Activated CD4-positive, alpha-beta T cell treated with anti-CD3 and anti-CD28 coated beads, Interleukin-2, amount 10 ng/mL, durations not matched to agents 7 days and 5 days (primary cell): ENCODE measurements at regions of chr5 and their contacts with region 1.

Region 1: DNA sequence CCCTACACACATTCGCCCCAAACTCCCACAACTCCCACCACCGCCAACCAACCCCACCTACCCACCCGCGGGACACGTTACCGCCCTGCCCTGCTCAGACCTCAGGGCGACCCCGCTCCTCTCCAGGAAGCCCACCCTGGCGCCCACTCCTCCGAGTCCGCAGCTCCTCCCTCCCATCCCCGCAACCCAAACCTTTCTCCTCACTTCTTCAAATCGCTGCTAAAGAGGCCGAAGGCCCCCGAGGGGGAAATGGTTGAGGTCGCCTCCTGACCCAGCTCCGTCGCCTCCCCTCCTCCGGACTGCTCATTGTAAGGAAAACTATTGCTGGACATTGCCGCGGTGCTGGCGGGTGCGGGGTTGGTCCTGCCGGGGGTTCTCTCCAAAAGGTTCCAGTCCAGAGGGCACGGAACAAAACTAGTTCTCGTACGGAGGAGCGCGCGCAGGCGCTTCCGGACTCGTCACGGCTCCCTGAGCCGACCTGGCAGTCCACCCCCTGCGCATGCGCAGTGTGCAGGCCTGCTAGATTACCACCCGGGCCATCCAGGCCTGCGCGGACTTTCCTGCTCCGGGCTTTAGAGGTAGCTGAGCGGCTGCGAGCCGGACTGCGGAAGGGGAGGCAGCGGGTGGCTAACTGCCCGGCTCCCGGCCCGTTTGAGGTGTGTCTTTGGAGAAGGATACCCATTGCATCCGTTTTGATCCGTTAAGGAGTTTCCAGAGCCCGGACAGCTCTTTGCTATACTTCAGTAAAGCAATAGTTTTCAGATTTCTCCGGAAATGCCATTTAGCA is at the start of gene AP3B1:
- DNase-seq: peak; percentile 98
- H3K4me3 Mint-ChIP-seq: peak within 1 kb of the TSS; percentile 97
- H3K27ac Mint-ChIP-seq: peak within 1 kb of the TSS; percentile 100
- H3K4me1 Mint-ChIP-seq: peaks cover 38% of the 10 kb centered on the region
- H3K27me3 Mint-ChIP-seq: peaks cover 3% of the 10 kb centered on the region
- total RNA-seq, gene AP3B1: 39.4 to 52.3 TPM

Region 2: DNA sequence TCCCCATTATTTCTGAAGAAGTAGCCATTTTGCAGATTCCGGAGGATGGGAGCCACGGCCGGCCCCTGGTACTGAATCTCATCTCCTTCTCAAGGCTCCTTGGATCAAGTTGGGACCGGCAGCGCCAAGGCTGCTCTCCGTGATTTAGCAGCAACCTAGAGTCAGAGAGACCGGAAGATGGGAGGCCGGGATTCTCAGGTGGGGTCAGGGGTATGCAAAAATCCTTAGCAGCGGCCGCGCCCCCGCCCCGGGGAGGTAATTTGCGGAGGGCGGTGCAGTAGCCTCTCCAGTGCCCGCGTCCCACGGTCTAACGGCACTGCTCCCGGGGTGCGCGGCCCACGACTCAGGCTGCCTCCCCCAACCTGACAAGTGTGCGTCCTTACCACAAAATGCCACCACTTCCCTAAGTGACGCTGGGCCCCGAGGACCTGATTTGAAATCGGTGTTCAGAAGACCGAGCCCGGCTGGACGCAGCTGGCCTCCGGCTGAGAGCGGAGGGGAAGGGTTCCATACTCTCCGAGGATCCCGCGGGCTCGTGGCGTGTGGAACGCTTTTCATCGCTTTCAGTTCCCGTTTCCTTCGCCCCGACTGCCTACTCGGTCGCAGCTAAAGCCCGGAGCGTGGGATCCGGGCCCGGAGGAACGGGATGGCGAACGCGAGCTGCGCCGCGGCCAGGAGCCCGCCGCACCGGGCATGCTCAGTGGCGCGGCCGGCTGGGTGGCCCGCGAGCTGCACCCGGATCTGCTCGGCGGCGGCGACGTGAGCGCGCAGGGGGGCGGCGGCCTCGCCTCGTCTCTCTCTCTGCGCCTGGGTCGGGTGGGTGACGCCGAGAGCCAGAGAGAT is 65.6 kb after region 1 on chr5 and contains the start of gene SCAMP1:
- CTCF ChIA-PET with region 1: interaction called, 17 read pairs
- POLR2A ChIA-PET with region 1: interaction called, 20 read pairs
- DNase-seq: peak; percentile 91
- H3K4me3 Mint-ChIP-seq: peak within 1 kb of the TSS; percentile 97
- H3K27ac Mint-ChIP-seq: peak within 1 kb of the TSS; percentile 99
- H3K4me1 Mint-ChIP-seq: peaks cover 32% of the 10 kb centered on the region
- H3K27me3 Mint-ChIP-seq: no peaks in the 10 kb centered on the region
- total RNA-seq, gene SCAMP1: 17.4 to 19.3 TPM

Region 3: GRCh38 chr5:78482948-78483347 is 188.5 kb after region 1 on chr5:
- CTCF ChIA-PET with region 1: no interaction called
- POLR2A ChIA-PET with region 1: no interaction called
- DNase-seq: no peak
- H3K4me3 Mint-ChIP-seq: no peak overlapping the region
- H3K27ac Mint-ChIP-seq: no peak overlapping the region
- H3K4me1 Mint-ChIP-seq: peaks cover 18% of the 10 kb centered on the region
- H3K27me3 Mint-ChIP-seq: no peaks in the 10 kb centered on the region